Mucosa of descending colon (tissue), 3 donors: ENCODE measurements at regions of chr15 and their contacts with region 1.

Region 1: GRCh38 chr15:84955089-84955848 is 26.4 kb upstream of the PDE8A start:
- DNase-seq: peak; percentile 60 to 87 (median 80)
- ATAC-seq: peak; percentile 96
- H3K4me3 ChIP-seq: no peak overlapping the region
- H3K4me1 ChIP-seq: no peaks in the 10 kb centered on the region
- CTCF ChIP-seq: peak; percentile 51

Region 2: GRCh38 chr15:84799349-84800187 is 155.7 kb before region 1 on chr15:
- intact Hi-C with region 1: no loop called
- DNase-seq: no peak
- ATAC-seq: no peak
- H3K4me3 ChIP-seq: no peak overlapping the region
- H3K4me1 ChIP-seq: no peaks in the 10 kb centered on the region
- CTCF ChIP-seq: no peak

Region 3: GRCh38 chr15:85044251-85044853 is 89.1 kb after region 1 on chr15:
- intact Hi-C with region 1: loop called (anchors 5 kb)
- DNase-seq: peak in 1 of 3 donors; percentile 84
- ATAC-seq: peak; percentile 85
- H3K4me3 ChIP-seq: no peak overlapping the region
- H3K4me1 ChIP-seq: peaks cover 14% of the 10 kb centered on the region
- CTCF ChIP-seq: peak; percentile 30

Region 4: DNA sequence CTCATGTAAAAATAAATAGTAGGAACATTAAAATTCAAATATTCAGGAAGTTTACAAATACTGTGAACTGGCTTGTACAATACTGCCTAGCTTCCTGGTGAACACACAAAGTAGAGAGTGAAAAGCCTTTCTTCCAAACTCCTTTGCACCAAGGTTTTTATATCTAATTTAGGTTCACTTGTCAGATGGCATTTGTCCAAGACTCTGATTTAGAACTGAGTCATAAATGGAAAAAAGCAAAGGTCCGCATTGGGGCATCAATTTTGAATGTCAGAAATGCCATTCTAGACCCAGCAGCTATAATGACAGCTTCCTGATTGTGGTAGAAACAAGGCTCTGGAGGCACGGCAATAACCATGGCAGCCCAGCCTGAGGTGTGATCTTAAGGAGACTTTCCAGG is 187.0 kb after region 1 on chr15:
- intact Hi-C with region 1: loop called in 1 of 2 experiments (anchors 10 kb)
- DNase-seq: no peak
- ATAC-seq: no peak
- H3K4me3 ChIP-seq: no peak overlapping the region
- H3K4me1 ChIP-seq: no peaks in the 10 kb centered on the region
- CTCF ChIP-seq: no peak